ENCODE measurements at regions of chr20 and their contacts with region 1.

Region 1: GRCh38 chr20:36098364-36098763 is 56.2 kb upstream of the EPB41L1 start:
- DNase-seq: peak; percentile 82
- ATAC-seq: peak; percentile 76
- H3K4me3 ChIP-seq: no peak overlapping the region
- H3K4me3 Mint-ChIP-seq: peak overlapping the region; percentile 10
- H3K27ac ChIP-seq: peak overlapping the region in 1 of 2 donors; percentile 49
- H3K27ac Mint-ChIP-seq: peak overlapping the region; percentile 66
- H3K4me1 ChIP-seq: peaks cover 28 to 32% of the 10 kb centered on the region in 2 donors
- H3K4me1 Mint-ChIP-seq: peaks cover 29% of the 10 kb centered on the region
- H3K27me3 ChIP-seq: peaks cover 0 to 13% (median 7%) of the 10 kb centered on the region in 4 experiments
- H3K27me3 Mint-ChIP-seq: peaks cover 6% of the 10 kb centered on the region
- CTCF ChIP-seq: no peak

Region 2: DNA sequence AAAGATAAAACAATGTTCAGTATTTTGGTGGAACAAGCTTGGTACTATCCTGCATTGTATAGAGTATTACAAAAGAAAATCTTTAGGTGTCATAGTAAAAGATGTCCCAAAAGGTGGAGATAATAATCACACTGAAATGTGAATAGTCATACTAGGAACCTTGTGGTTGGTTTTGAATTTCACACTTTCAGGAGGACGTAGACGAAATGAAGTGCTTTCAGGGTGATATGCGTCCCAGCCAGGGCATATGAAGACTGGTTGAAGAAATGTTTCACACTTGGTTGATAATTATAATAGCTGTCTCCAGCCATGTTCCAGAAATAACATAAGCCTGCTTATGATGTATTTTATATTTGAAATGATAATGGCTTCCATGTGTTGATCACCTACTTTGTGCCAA is 204.4 kb before region 1 on chr20:
- CTCF ChIA-PET with region 1: no interaction called
- POLR2A ChIA-PET with region 1: no interaction called
- intact Hi-C with region 1: no loop called
- DNase-seq: no peak
- ATAC-seq: no peak
- H3K4me3 ChIP-seq: no peak overlapping the region
- H3K4me3 Mint-ChIP-seq: no peak overlapping the region
- H3K27ac ChIP-seq: no peak overlapping the region
- H3K27ac Mint-ChIP-seq: no peak overlapping the region
- H3K4me1 ChIP-seq: peaks cover 4 to 8% of the 10 kb centered on the region in 2 donors
- H3K4me1 Mint-ChIP-seq: peaks cover 20% of the 10 kb centered on the region
- H3K27me3 ChIP-seq: no peaks in the 10 kb centered on the region
- H3K27me3 Mint-ChIP-seq: no peaks in the 10 kb centered on the region
- CTCF ChIP-seq: no peak

Region 3: GRCh38 chr20:36085686-36086267 is 12.6 kb before region 1 on chr20:
- CTCF ChIA-PET with region 1: no interaction called
- POLR2A ChIA-PET with region 1: no interaction called
- intact Hi-C with region 1: no loop called
- DNase-seq: no peak
- ATAC-seq: no peak
- H3K4me3 ChIP-seq: no peak overlapping the region
- H3K4me3 Mint-ChIP-seq: no peak overlapping the region
- H3K27ac ChIP-seq: no peak overlapping the region
- H3K27ac Mint-ChIP-seq: no peak overlapping the region
- H3K4me1 ChIP-seq: peaks cover 0 to 6% of the 10 kb centered on the region in 2 donors
- H3K4me1 Mint-ChIP-seq: peaks cover 4% of the 10 kb centered on the region
- H3K27me3 ChIP-seq: peaks cover 0 to 25% (median 11%) of the 10 kb centered on the region in 4 experiments
- H3K27me3 Mint-ChIP-seq: peaks cover 38% of the 10 kb centered on the region
- CTCF ChIP-seq: no peak

Region 4: DNA sequence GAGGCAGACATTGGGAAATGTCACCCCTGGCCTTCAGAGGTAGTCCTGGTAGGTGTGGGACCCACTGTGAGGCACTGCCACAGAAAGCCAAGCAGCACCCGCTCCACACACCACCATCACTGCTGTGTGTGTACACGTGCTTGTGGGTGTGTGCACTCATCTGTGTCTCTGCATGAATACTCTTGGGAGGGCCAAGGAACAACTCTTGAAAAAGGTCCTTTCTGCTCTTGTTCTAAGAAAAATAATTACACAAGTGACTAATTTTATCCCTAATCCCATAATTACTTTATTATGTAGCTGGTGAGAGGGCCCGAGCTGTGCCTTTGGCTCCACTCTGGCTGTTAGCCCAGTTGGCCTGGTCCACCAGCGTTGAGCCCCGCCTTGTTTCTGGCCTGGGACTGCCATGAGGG is 34.4 kb after region 1 on chr20:
- CTCF ChIA-PET with region 1: interaction called, 12 read pairs
- POLR2A ChIA-PET with region 1: interaction called, 11 read pairs
- intact Hi-C with region 1: loop called (anchors 5 kb)
- DNase-seq: peak; percentile 42
- ATAC-seq: peak; percentile 94
- H3K4me3 ChIP-seq: no peak overlapping the region
- H3K4me3 Mint-ChIP-seq: no peak overlapping the region
- H3K27ac ChIP-seq: no peak overlapping the region
- H3K27ac Mint-ChIP-seq: no peak overlapping the region
- H3K4me1 ChIP-seq: peaks cover 9 to 12% of the 10 kb centered on the region in 2 donors
- H3K4me1 Mint-ChIP-seq: peaks cover 14% of the 10 kb centered on the region
- H3K27me3 ChIP-seq: no peaks in the 10 kb centered on the region
- H3K27me3 Mint-ChIP-seq: peaks cover 6% of the 10 kb centered on the region
- CTCF ChIP-seq: no peak

Region 5: GRCh38 chr20:36709126-36709525 is 610.8 kb after region 1 on chr20:
- CTCF ChIA-PET with region 1: no interaction called
- POLR2A ChIA-PET with region 1: no interaction called
- intact Hi-C with region 1: no loop called
- DNase-seq: no peak
- ATAC-seq: no peak
- H3K4me3 ChIP-seq: no peak overlapping the region
- H3K4me3 Mint-ChIP-seq: no peak overlapping the region
- H3K27ac ChIP-seq: no peak overlapping the region
- H3K27ac Mint-ChIP-seq: no peak overlapping the region
- H3K4me1 ChIP-seq: no peaks in the 10 kb centered on the region
- H3K4me1 Mint-ChIP-seq: no peaks in the 10 kb centered on the region
- H3K27me3 ChIP-seq: no peaks in the 10 kb centered on the region
- H3K27me3 Mint-ChIP-seq: no peaks in the 10 kb centered on the region
- CTCF ChIP-seq: no peak